CD4-positive, alpha-beta memory T cell (primary cell): ENCODE measurements at regions of chr11 and their contacts with region 1.

Region 1: DNA sequence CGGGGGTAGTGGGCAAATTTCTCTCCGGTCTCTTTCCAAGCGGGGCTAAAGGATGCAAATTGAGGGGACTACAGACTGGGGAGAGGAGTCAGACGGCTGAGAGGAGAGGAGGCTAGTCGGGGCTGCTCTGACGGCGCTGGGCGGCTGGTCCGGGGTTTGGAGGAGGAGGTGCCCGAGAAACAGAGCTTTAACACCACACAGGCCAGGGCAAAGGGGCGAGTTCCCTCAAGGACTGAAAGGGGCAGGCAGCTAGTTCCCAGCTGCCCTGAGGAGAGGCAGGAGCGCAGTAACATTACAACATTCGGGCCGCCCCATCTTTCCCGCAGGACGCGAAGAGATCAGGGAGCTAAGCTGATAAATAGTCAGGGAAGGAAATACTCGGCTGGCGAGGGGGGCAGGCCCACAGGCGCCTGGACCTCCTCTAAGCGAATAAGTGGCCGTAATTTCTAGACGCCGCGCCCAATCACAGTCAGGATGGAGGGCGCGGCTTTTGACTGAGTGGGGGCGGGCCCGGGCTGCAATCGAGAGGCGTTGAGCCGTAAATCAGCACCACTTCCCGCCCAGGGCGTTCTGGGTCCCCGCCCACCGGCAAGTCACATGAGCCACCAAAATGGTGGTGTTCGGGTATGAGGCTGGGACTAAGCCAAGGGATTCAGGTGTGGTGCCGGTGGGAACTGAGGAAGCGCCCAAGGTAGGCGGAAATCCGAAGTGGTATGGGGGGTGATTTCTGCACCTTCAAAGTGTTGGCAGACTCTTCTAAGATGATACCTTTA is at the start of gene TMEM126B:
- DNase-seq: peak; percentile 92 to 97 (median 94)
- H3K4me3 ChIP-seq: peak within 1 kb of the TSS; percentile 58 to 73
- H3K4me3 Mint-ChIP-seq: peak within 1 kb of the TSS; percentile 93 to 99 (median 98)
- H3K27ac ChIP-seq: peak within 1 kb of the TSS; percentile 82
- H3K27ac Mint-ChIP-seq: peak within 1 kb of the TSS; percentile 91 to 99 (median 97)
- H3K4me1 ChIP-seq: peaks cover 30% of the 10 kb centered on the region
- H3K4me1 Mint-ChIP-seq: peaks cover 27 to 47% (median 36%) of the 10 kb centered on the region in 4 donors
- H3K27me3 ChIP-seq: no peaks in the 10 kb centered on the region
- H3K27me3 Mint-ChIP-seq: peaks cover 0 to 2% of the 10 kb centered on the region in 2 donors
- total RNA-seq, gene TMEM126B: 40.9 to 46.8 TPM

Region 2: DNA sequence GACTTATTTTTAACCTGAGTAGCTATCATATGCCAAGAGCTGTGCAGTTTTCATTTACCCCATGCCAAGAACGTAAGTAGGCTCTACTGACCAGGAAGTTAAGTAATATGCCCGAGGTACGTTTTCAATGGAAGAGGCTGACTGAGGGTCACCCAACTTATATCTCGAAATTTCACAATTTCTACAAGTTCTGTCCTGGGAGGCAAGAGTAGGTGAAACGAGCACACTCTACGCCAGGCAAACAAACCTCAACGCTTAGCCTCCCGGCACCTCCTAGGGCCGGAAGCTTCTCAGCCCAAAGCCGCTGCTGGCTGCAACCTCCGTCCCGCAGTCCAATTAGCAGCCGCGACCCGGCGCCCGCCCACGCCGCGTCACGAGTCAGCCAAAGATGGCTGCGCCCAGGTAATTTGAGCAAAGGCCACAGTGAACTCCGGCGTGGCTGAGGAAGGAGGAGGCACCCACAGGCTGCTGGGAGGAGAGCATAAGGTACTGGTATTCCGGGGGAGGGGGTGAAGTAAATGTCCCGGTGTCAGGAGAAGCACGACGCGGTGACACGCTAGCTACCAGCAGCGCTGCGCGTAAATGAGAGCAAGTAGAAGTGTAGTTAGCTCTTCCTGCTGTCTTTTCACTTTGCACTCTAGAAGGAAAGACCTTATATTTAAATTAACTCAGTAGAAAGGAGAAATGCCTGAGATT is 19.6 kb after region 1 on chr11 and contains the start of gene TMEM126A:
- CTCF ChIA-PET with region 1: interaction called, 11 read pairs
- POLR2A ChIA-PET with region 1: interaction called, 55 read pairs
- intact Hi-C with region 1: loop called (anchors 1 kb)
- DNase-seq: peak; percentile 87 to 93 (median 89)
- H3K4me3 ChIP-seq: peak within 1 kb of the TSS; percentile 57 to 76
- H3K4me3 Mint-ChIP-seq: peak within 1 kb of the TSS; percentile 92 to 99 (median 96)
- H3K27ac ChIP-seq: peak within 1 kb of the TSS; percentile 72
- H3K27ac Mint-ChIP-seq: peak within 1 kb of the TSS; percentile 88 to 99 (median 96)
- H3K4me1 ChIP-seq: peaks cover 26% of the 10 kb centered on the region
- H3K4me1 Mint-ChIP-seq: peaks cover 19 to 32% (median 27%) of the 10 kb centered on the region in 4 donors
- H3K27me3 ChIP-seq: peaks cover 4% of the 10 kb centered on the region
- H3K27me3 Mint-ChIP-seq: peaks cover 5 to 8% of the 10 kb centered on the region in 2 donors
- total RNA-seq, gene TMEM126A: 17.4 to 17.5 TPM

Region 3: GRCh38 chr11:85652786-85653447 is 24.7 kb after region 1 on chr11:
- CTCF ChIA-PET with region 1: interaction called, 11 read pairs
- POLR2A ChIA-PET with region 1: interaction called, 55 read pairs
- intact Hi-C with region 1: no loop called
- DNase-seq: no peak
- H3K4me3 ChIP-seq: no peak overlapping the region
- H3K4me3 Mint-ChIP-seq: no peak overlapping the region
- H3K27ac ChIP-seq: no peak overlapping the region
- H3K27ac Mint-ChIP-seq: peak overlapping the region in 3 of 7 donors; percentile 5 to 78 (median 71)
- H3K4me1 ChIP-seq: peaks cover 18% of the 10 kb centered on the region
- H3K4me1 Mint-ChIP-seq: peaks cover 22 to 29% (median 26%) of the 10 kb centered on the region in 4 donors
- H3K27me3 ChIP-seq: no peaks in the 10 kb centered on the region
- H3K27me3 Mint-ChIP-seq: no peaks in the 10 kb centered on the region

Region 4: DNA sequence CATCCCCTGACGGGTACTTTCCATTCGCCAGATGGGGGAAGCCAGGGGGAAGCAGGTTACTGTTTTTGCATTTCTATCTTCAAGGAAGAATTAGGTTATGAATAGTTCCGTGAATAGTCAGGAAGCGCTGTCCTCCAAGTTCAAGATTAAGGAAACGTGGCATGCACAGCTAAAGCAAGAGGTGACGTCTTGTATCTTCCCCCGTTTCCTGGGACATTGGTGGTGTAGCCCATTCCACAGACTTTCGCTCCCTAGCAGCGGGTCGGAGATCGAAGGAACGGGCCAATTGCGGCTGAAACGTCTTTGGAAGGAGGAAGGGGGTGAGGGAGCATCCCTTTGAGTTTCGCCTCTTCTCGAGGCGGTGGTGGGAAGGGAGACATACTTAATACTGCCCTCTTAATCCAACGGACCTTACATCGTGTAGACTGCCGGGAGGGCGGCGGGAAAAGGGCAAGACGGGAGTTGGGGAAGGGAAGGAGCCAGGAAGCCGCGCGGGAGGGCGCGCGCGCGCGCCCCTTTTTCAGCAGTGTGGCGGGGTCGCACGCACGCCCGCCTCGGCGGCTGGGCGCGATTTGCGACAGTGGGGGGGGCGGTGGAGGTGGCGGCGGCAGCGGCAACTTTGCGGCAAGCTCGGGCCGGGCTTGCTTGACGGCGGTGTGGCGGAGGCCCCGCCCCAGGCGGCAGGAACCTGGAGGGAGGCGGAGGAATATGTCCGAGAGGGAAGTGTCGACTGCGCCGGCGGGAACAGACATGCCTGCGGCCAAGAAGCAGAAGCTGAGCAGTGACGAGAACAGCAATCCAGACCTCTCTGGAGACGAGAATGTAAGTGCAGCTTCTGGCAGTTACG is 616.6 kb after region 1 on chr11 and contains the start of gene EED:
- CTCF ChIA-PET with region 1: interaction called, 3 read pairs
- POLR2A ChIA-PET with region 1: interaction called, 18 read pairs
- intact Hi-C with region 1: loop called (anchors 1 kb)
- DNase-seq: peak; percentile 92 to 96 (median 93)
- H3K4me3 ChIP-seq: peak within 1 kb of the TSS; percentile 98 to 99
- H3K4me3 Mint-ChIP-seq: no peak within 1 kb of the TSS
- H3K27ac ChIP-seq: peak within 1 kb of the TSS; percentile 99
- H3K27ac Mint-ChIP-seq: no peak within 1 kb of the TSS
- H3K4me1 ChIP-seq: peaks cover 54% of the 10 kb centered on the region
- H3K4me1 Mint-ChIP-seq: peaks cover 0 to 35% (median 13%) of the 10 kb centered on the region in 4 donors
- H3K27me3 ChIP-seq: no peaks in the 10 kb centered on the region
- H3K27me3 Mint-ChIP-seq: peaks cover 0 to 2% of the 10 kb centered on the region in 2 donors
- total RNA-seq, gene EED: 47.1 to 51.0 TPM

Region 5: DNA sequence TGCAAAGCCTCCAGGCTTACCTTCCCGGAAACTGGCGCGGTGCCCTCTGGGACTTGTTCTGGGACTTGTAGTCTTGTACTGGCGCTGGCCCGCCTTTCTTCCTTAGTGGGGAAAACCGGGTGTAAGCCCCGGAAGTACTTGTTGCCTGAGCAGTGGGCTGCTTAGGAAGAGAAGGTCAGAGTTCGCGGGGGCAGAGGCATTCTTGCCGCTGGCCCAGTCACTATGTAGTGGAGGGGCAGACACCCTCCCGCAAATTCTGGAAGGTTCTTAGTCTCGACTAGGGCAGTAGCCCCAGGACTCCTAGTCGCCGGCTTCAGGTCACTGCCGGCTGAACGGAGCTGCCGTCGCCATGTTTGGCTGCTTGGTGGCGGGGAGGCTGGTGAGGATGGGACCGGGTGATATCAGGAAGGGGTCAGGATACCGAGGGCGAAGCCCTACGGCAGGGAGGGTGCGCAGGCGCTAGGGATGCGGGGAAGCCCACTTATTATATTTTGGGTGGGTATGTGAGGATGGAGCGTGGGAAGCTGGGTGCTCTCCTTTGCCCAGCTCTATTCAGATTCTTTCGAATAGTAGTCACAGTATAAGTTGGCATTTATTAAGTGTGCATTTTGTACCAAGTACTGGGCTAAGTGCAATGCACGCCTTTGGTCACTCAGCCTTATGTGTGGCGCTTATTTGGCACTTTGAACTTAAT is 674.1 kb after region 1 on chr11 and contains the start of gene HIKESHI:
- CTCF ChIA-PET with region 1: no interaction called
- POLR2A ChIA-PET with region 1: interaction called, 6 read pairs
- intact Hi-C with region 1: loop called (anchors 2 kb)
- DNase-seq: peak; percentile 83 to 95 (median 84)
- H3K4me3 ChIP-seq: peak within 1 kb of the TSS; percentile 54 to 85
- H3K4me3 Mint-ChIP-seq: peak within 1 kb of the TSS; percentile 94 to 100 (median 100)
- H3K27ac ChIP-seq: peak within 1 kb of the TSS; percentile 87
- H3K27ac Mint-ChIP-seq: peak within 1 kb of the TSS; percentile 93 to 100 (median 99)
- H3K4me1 ChIP-seq: peaks cover 24% of the 10 kb centered on the region
- H3K4me1 Mint-ChIP-seq: peaks cover 12 to 29% (median 23%) of the 10 kb centered on the region in 4 donors
- H3K27me3 ChIP-seq: no peaks in the 10 kb centered on the region
- H3K27me3 Mint-ChIP-seq: peaks cover 0 to 1% of the 10 kb centered on the region in 2 donors
- total RNA-seq, gene HIKESHI: 26.6 to 33.3 TPM

Region 6: DNA sequence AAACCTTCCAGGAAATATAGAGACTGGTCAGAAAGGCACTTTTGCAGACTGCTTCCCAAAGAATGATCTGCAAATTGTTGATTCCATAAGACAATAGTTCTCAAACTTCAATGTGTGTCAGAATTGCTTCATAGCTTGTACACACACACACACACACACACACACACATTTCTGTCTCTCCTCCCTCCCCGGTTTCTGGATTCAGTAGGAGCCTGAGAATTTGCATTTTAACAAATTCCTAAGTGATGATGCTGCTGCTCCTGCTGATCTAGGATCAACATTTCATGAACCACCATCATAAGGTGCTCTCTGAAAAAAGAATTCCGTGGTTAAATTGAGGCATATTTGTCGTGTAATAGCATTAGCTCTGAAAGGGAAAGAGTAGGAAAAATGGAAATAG is 1362.3 kb after region 1 on chr11:
- CTCF ChIA-PET with region 1: no interaction called
- POLR2A ChIA-PET with region 1: no interaction called
- intact Hi-C with region 1: no loop called
- DNase-seq: no peak
- H3K4me3 ChIP-seq: no peak overlapping the region
- H3K4me3 Mint-ChIP-seq: no peak overlapping the region
- H3K27ac ChIP-seq: no peak overlapping the region
- H3K27ac Mint-ChIP-seq: no peak overlapping the region
- H3K4me1 ChIP-seq: no peaks in the 10 kb centered on the region
- H3K4me1 Mint-ChIP-seq: no peaks in the 10 kb centered on the region
- H3K27me3 ChIP-seq: no peaks in the 10 kb centered on the region
- H3K27me3 Mint-ChIP-seq: peaks cover 0 to 2% of the 10 kb centered on the region in 2 donors